CD4-positive, alpha-beta T cell (primary cell): ENCODE measurements at regions of chr2 and their contacts with region 1.

Region 1: DNA sequence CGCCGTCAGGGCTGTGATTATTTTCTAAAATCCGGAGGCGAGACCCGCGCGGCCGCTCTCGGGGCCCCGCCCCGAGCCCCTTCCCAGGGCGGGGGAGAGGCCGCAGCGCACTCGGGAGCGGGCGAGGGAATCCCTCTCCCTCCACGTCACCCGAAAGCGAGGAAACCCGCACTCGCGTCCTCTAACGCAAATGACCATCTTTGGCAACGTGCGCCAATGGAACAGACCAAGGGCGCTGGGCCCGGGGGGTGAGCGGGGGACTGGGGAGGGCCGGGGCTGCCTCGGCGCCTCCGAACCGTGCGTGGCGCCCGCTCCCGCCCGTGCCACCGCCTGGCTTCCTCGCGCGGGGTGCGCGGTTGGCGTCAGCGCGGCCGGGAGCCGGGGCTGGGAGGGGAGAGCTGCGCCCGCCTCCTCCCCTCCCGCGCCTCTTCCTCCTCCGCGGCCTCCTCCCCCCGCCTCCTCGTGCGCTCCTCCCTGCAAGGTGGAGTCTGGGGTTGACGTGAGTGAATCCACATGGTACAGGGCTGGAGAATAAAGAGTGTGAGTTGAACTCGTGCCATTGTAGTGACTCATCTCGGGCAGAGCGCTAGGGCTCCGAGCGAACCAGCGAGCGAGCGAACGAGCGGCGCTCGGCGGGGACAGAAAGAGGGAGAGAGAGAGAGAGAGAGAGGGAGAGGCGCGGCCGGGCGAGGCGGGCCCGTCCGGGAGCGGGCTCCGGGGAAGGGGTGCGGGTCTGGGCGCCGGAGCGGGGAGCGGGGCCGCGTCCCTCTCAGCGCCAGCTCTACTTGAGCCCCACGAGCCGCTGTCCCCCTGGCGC is at the start of gene FOSL2:
- DNase-seq: peak; percentile 88 to 99 (median 92)
- ATAC-seq: peak; percentile 72
- H3K4me3 ChIP-seq: peak within 1 kb of the TSS; percentile 79
- H3K4me3 Mint-ChIP-seq: peak within 1 kb of the TSS; percentile 95
- H3K27ac ChIP-seq: peak within 1 kb of the TSS; percentile 78 to 89
- H3K27ac Mint-ChIP-seq: peak within 1 kb of the TSS; percentile 90
- H3K4me1 ChIP-seq: peaks cover 49% of the 10 kb centered on the region
- H3K4me1 Mint-ChIP-seq: peaks cover 20% of the 10 kb centered on the region
- H3K27me3 ChIP-seq: no peaks in the 10 kb centered on the region
- H3K27me3 Mint-ChIP-seq: peaks cover 5% of the 10 kb centered on the region
- CTCF ChIP-seq: no peak
- total RNA-seq, gene FOSL2: 152 to 155 TPM

Region 2: GRCh38 chr2:26925087-26925791 is 1467.3 kb before region 1 on chr2:
- CTCF ChIA-PET with region 1: no interaction called
- POLR2A ChIA-PET with region 1: no interaction called
- intact Hi-C with region 1: no loop called
- DNase-seq: no peak
- ATAC-seq: no peak
- H3K4me3 ChIP-seq: no peak overlapping the region
- H3K4me3 Mint-ChIP-seq: no peak overlapping the region
- H3K27ac ChIP-seq: no peak overlapping the region
- H3K27ac Mint-ChIP-seq: no peak overlapping the region
- H3K4me1 ChIP-seq: peaks cover 6% of the 10 kb centered on the region
- H3K4me1 Mint-ChIP-seq: peaks cover 9% of the 10 kb centered on the region
- H3K27me3 ChIP-seq: peaks cover 3 to 19% of the 10 kb centered on the region in 2 experiments
- H3K27me3 Mint-ChIP-seq: peaks cover 36% of the 10 kb centered on the region
- CTCF ChIP-seq: no peak

Region 3: GRCh38 chr2:27703638-27704341 is 688.7 kb before region 1 on chr2:
- CTCF ChIA-PET with region 1: no interaction called
- POLR2A ChIA-PET with region 1: no interaction called
- intact Hi-C with region 1: loop called (anchors 5 kb)
- DNase-seq: peak; percentile 71 to 91 (median 80)
- ATAC-seq: peak; percentile 91
- H3K4me3 ChIP-seq: no peak overlapping the region
- H3K4me3 Mint-ChIP-seq: no peak overlapping the region
- H3K27ac ChIP-seq: no peak overlapping the region
- H3K27ac Mint-ChIP-seq: no peak overlapping the region
- H3K4me1 ChIP-seq: peaks cover 7% of the 10 kb centered on the region
- H3K4me1 Mint-ChIP-seq: no peaks in the 10 kb centered on the region
- H3K27me3 ChIP-seq: no peaks in the 10 kb centered on the region
- H3K27me3 Mint-ChIP-seq: no peaks in the 10 kb centered on the region
- CTCF ChIP-seq: peak; percentile 97

Region 4: DNA sequence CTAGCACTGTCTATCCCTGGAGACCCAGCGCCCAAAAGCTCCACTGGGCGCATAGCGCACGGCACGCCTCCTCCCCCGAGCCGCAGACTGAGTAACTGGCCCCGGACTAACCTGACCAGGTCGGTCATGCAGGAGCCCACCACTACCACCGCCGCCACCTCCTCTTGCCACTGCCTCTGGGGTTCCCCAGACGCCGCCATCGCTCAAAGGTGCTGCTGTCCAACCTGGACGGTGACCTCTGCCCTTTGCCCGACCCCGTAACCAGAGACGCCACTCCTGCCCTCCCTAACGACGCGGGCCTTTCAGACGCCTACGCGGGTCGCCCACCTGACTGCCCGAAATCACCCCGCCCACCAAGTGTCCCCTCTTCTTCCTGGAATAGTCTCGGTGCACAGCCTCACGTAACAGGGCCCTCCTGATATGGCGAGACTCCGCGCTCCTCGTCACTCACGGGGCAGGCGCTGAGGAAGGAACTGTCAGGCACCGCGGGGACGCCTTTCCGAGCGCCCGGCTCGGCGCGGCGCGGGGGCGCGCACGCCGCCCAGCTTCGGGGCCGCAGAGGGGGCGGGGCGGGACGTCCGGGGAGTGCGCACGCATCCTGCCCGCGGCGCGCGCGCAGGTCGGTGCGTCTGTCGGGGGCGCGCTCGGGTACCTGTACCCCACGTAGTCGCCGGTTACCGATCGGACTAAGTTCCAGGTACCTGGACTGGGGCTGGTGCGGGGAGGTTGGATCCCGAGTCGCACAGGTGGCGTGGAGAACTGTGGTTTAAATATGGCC is 502.2 kb before region 1 on chr2 and contains the starts of genes BABAM2 and RBKS:
- CTCF ChIA-PET with region 1: no interaction called
- POLR2A ChIA-PET with region 1: interaction called, 3 read pairs
- intact Hi-C with region 1: loop called (anchors 1 to 2 kb)
- DNase-seq: peak; percentile 83 to 98 (median 90)
- ATAC-seq: peak; percentile 73
- H3K4me3 ChIP-seq: peak within 1 kb of the TSS; percentile 79
- H3K4me3 Mint-ChIP-seq: peak within 1 kb of the TSS; percentile 97
- H3K27ac ChIP-seq: peak within 1 kb of the TSS; percentile 96 to 99
- H3K27ac Mint-ChIP-seq: peak within 1 kb of the TSS; percentile 100
- H3K4me1 ChIP-seq: peaks cover 23% of the 10 kb centered on the region
- H3K4me1 Mint-ChIP-seq: peaks cover 59% of the 10 kb centered on the region
- H3K27me3 ChIP-seq: no peaks in the 10 kb centered on the region
- H3K27me3 Mint-ChIP-seq: peaks cover 6% of the 10 kb centered on the region
- CTCF ChIP-seq: no peak
- total RNA-seq, gene BABAM2: 29.2 to 32.8 TPM
- total RNA-seq, gene RBKS: 2.6 to 3.0 TPM

Region 5: DNA sequence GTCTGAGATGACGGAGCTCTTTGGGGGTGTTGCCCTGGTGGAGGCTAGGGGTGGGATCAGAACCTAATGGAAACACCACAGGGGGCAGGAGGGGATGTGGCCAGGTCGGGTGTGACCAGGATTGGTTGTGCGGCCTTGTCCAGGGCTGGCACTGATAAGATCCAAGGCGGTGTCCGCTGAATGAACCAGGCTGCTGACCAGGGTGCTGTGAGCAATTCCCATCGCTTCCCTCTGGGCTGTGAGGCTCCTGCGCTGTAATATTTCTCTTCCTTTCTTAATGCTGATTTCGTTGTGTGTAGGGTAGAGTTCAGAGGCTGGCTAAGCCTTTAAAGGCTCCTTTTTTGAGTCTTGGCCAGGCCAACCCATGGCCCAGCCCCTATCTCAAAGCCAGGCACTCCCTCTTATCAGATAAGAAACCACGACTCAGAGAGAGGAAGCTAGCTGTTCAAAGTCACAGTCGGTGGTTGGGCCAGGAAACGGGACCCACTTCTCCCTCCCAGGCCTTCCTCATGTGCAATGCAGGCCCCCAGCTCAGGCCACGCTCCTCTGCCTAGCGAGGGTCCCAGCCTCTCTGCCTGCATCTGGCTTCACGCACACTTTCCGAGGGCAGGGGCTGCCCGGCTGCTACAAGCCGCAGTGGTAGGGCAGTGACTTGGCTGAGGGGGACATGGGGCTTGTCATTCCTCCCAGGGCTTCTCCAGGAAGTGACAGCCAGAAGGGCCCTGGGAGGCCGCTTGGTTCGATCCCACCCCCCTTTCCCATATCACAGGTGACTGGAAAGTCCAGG is 25.8 kb before region 1 on chr2:
- CTCF ChIA-PET with region 1: interaction called, 4 read pairs
- POLR2A ChIA-PET with region 1: interaction called, 35 read pairs
- intact Hi-C with region 1: no loop called
- DNase-seq: peak; percentile 31 to 88 (median 52)
- ATAC-seq: peak; percentile 87
- H3K4me3 ChIP-seq: peak overlapping the region; percentile 29
- H3K4me3 Mint-ChIP-seq: peak overlapping the region; percentile 90
- H3K27ac ChIP-seq: no peak overlapping the region
- H3K27ac Mint-ChIP-seq: peak overlapping the region; percentile 43
- H3K4me1 ChIP-seq: peaks cover 68% of the 10 kb centered on the region
- H3K4me1 Mint-ChIP-seq: peaks cover 57% of the 10 kb centered on the region
- H3K27me3 ChIP-seq: no peaks in the 10 kb centered on the region
- H3K27me3 Mint-ChIP-seq: no peaks in the 10 kb centered on the region
- CTCF ChIP-seq: no peak

Region 6: DNA sequence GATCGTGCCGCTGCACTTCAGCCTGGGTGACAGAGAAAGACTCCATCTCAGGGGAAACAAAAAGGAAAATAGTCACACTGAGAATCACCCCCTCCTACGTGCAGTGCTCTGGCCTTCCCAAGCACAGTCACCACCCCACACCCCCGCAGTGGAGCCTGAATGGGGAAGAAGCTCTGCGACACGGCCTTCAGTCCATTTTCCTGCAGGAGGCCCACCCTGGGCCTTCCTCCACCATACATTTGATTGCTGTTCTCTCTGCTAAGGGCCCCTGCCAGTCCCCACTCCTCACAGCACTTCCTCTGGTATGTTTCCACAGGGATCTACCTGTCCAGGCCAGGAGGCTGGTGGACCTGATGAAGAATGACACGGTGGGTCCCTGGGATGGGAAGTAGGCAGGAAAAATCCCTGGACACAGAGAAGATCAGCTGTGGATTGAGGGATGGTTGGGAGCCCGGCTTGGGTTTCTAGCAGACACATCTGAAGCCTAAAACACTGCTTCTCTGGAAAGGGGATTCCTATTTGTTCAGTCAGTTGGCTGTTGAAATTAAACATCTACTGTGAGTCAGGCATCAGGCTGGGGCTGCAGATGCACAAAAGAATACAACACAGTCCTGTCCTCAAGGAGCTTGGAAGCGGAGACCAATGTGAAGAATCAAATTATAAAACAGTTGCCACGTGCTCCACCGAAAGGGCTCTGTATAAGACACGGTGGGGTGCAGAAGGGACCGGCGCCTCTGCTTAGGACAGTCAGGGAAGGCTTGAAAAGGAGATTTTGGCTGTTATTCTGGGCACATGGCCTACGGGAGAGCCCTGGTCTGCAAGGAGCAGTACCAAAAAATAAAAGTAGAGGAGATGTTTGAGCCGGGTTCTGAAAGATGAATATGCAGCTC is 185.5 kb after region 1 on chr2:
- CTCF ChIA-PET with region 1: no interaction called
- POLR2A ChIA-PET with region 1: no interaction called
- intact Hi-C with region 1: no loop called
- DNase-seq: no peak
- ATAC-seq: no peak
- H3K4me3 ChIP-seq: no peak overlapping the region
- H3K4me3 Mint-ChIP-seq: no peak overlapping the region
- H3K27ac ChIP-seq: no peak overlapping the region
- H3K27ac Mint-ChIP-seq: no peak overlapping the region
- H3K4me1 ChIP-seq: no peaks in the 10 kb centered on the region
- H3K4me1 Mint-ChIP-seq: no peaks in the 10 kb centered on the region
- H3K27me3 ChIP-seq: no peaks in the 10 kb centered on the region
- H3K27me3 Mint-ChIP-seq: no peaks in the 10 kb centered on the region
- CTCF ChIP-seq: no peak

Region 7: GRCh38 chr2:28621172-28622100 is 228.9 kb after region 1 on chr2:
- CTCF ChIA-PET with region 1: no interaction called
- POLR2A ChIA-PET with region 1: no interaction called
- intact Hi-C with region 1: loop called in 1 of 2 experiments (anchors 5 kb)
- DNase-seq: peak; percentile 55 to 96 (median 69)
- ATAC-seq: peak; percentile 86
- H3K4me3 ChIP-seq: peak overlapping the region; percentile 15
- H3K4me3 Mint-ChIP-seq: peak overlapping the region; percentile 76
- H3K27ac ChIP-seq: peak overlapping the region; percentile 93 to 98
- H3K27ac Mint-ChIP-seq: no peak overlapping the region
- H3K4me1 ChIP-seq: peaks cover 95% of the 10 kb centered on the region
- H3K4me1 Mint-ChIP-seq: peaks cover 86% of the 10 kb centered on the region
- H3K27me3 ChIP-seq: no peaks in the 10 kb centered on the region
- H3K27me3 Mint-ChIP-seq: no peaks in the 10 kb centered on the region
- CTCF ChIP-seq: no peak